ENCODE measurements at regions of chr12 and their contacts with region 1.

Region 1: DNA sequence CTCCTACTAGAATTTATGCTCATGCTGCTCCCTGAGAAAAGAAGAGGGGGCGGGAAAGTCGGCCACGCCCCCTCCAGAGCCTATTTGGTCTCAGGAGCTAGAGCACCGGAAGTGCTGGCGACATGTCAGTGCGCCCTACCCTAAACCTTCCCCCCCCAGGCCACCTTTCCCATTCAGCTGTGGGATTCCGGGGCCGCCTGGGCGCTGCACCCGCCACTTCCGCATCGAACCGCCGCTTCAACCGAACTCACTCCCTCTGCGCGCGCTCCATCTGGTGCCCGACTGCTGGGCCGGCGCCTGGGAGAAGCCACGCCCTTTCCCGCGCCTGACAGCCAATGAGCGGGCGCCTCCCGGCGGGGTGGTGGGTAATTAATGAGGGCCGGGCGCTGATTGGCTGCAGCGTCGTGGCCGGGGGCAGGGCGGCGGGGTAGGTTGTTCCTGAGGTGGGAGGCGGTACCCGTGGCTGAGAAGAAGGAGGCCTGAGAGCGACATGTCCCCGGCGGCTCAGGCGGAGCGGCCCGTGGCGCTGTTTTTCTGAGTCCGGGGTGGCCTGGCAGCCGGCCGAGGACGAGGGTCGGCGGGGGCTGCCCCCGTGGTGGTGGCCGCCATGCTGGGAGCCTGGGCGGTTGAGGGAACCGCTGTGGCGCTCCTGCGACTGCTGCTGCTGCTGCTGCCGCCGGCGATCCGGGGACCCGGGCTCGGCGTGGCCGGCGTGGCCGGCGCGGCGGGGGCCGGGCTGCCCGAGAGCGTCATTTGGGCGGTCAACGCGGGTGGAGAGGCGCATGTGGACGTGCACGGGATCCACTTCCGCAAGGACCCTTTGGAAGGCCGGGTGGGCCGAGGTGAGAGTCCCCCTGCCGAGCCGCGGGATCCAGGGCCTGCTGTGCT is at the start of gene MLEC:
- DNase-seq: peak; percentile 91
- ATAC-seq: peak; percentile 78
- H3K4me3 ChIP-seq: peak within 1 kb of the TSS; percentile 97
- H3K27ac ChIP-seq: peak within 1 kb of the TSS; percentile 96
- H3K4me1 ChIP-seq: peaks cover 15% of the 10 kb centered on the region
- H3K27me3 ChIP-seq: no peaks in the 10 kb centered on the region
- CTCF ChIP-seq: peak; percentile 26 to 79 (median 41); a peak in 5 of 6 replicates
- EP300 ChIP-seq: peak in 1 of 2 experiments; percentile 21; a peak in 1 of 4 replicates
- POLR2A ChIP-seq: peak; percentile 91
- RAD21 ChIP-seq: peak; percentile 68
- polyA plus RNA-seq, gene MLEC: 26.7 to 28.2 TPM

Region 2: GRCh38 chr12:120469450-120470149 is 217.3 kb before region 1 on chr12 and contains the start of gene SRSF9:
- CTCF ChIA-PET with region 1: no interaction called
- POLR2A ChIA-PET with region 1: no interaction called
- RAD21 ChIA-PET with region 1: no interaction called
- SMC1A ChIA-PET with region 1: no interaction called
- in situ Hi-C with region 1: no loop called
- intact Hi-C with region 1: no loop called
- DNase-seq: peak; percentile 80
- ATAC-seq: peak; percentile 89
- H3K4me3 ChIP-seq: peak within 1 kb of the TSS; percentile 87
- H3K27ac ChIP-seq: peak within 1 kb of the TSS; percentile 80
- H3K4me1 ChIP-seq: peaks cover 16% of the 10 kb centered on the region
- H3K27me3 ChIP-seq: no peaks in the 10 kb centered on the region
- CTCF ChIP-seq: peak; percentile 92 to 99 (median 96)
- EP300 ChIP-seq: no peak
- POLR2A ChIP-seq: peak; percentile 91
- RAD21 ChIP-seq: no peak
- polyA plus RNA-seq, gene SRSF9: 56.2 to 96.4 TPM

Region 3: GRCh38 chr12:120640840-120641833 is 45.8 kb before region 1 on chr12:
- CTCF ChIA-PET with region 1: interaction called, 454 read pairs
- POLR2A ChIA-PET with region 1: interaction called, 7 read pairs
- RAD21 ChIA-PET with region 1: interaction called, 144 read pairs
- SMC1A ChIA-PET with region 1: interaction called, 167 read pairs
- in situ Hi-C with region 1: no loop called
- intact Hi-C with region 1: no loop called
- DNase-seq: no peak
- ATAC-seq: peak; percentile 88
- H3K4me3 ChIP-seq: peak overlapping the region; percentile 32; the same call in 1 of the 2 replicates
- H3K27ac ChIP-seq: no peak overlapping the region
- H3K4me1 ChIP-seq: no peaks in the 10 kb centered on the region
- H3K27me3 ChIP-seq: peaks cover 6 to 8% of the 10 kb centered on the region in 2 experiments
- CTCF ChIP-seq: no peak
- EP300 ChIP-seq: no peak
- POLR2A ChIP-seq: no peak
- RAD21 ChIP-seq: no peak

Region 4: GRCh38 chr12:120662879-120663278 is 24.1 kb before region 1 on chr12:
- CTCF ChIA-PET with region 1: interaction called, 5 read pairs
- POLR2A ChIA-PET with region 1: interaction called, 57 read pairs
- RAD21 ChIA-PET with region 1: interaction called, 54 read pairs
- SMC1A ChIA-PET with region 1: interaction called, 149 read pairs
- in situ Hi-C with region 1: no loop called
- intact Hi-C with region 1: no loop called
- DNase-seq: peak; percentile 67
- ATAC-seq: peak; percentile 95
- H3K4me3 ChIP-seq: no peak overlapping the region
- H3K27ac ChIP-seq: no peak overlapping the region
- H3K4me1 ChIP-seq: peaks cover 9% of the 10 kb centered on the region
- H3K27me3 ChIP-seq: no peaks in the 10 kb centered on the region
- CTCF ChIP-seq: no peak
- EP300 ChIP-seq: 0 out of 4 replicates have a peak, but pooled peaks of 1 of the 2 experiments have one; percentile 59
- POLR2A ChIP-seq: no peak
- RAD21 ChIP-seq: 0 out of 2 replicates have a peak, but pooled peaks have one; percentile 4

Region 5: GRCh38 chr12:120669055-120669840 is 17.7 kb before region 1 on chr12:
- CTCF ChIA-PET with region 1: interaction called, 15 read pairs
- POLR2A ChIA-PET with region 1: interaction called, 57 read pairs
- RAD21 ChIA-PET with region 1: interaction called, 54 read pairs
- SMC1A ChIA-PET with region 1: interaction called, 149 read pairs
- in situ Hi-C with region 1: no loop called
- intact Hi-C with region 1: loop called (anchors 2 kb)
- DNase-seq: peak; percentile 79
- ATAC-seq: peak; percentile 84
- H3K4me3 ChIP-seq: peak overlapping the region; percentile 39
- H3K27ac ChIP-seq: peak overlapping the region; percentile 46
- H3K4me1 ChIP-seq: peaks cover 38% of the 10 kb centered on the region
- H3K27me3 ChIP-seq: no peaks in the 10 kb centered on the region
- CTCF ChIP-seq: no peak
- EP300 ChIP-seq: no peak; a peak in 1 of 4 replicates
- POLR2A ChIP-seq: no peak
- RAD21 ChIP-seq: no peak

Region 6: GRCh38 chr12:120698665-120699064 is 11.7 kb after region 1 on chr12:
- CTCF ChIA-PET with region 1: interaction called, 18 read pairs
- POLR2A ChIA-PET with region 1: interaction called, 7 read pairs
- RAD21 ChIA-PET with region 1: interaction called, 5 read pairs
- SMC1A ChIA-PET with region 1: interaction called, 14 read pairs
- in situ Hi-C with region 1: no loop called
- intact Hi-C with region 1: no loop called
- DNase-seq: no peak
- ATAC-seq: no peak
- H3K4me3 ChIP-seq: no peak overlapping the region
- H3K27ac ChIP-seq: no peak overlapping the region
- H3K4me1 ChIP-seq: no peaks in the 10 kb centered on the region
- H3K27me3 ChIP-seq: no peaks in the 10 kb centered on the region
- CTCF ChIP-seq: no peak
- EP300 ChIP-seq: no peak
- POLR2A ChIP-seq: no peak
- RAD21 ChIP-seq: no peak

Region 7: GRCh38 chr12:120710031-120710804 is 23.3 kb after region 1 on chr12 and contains the start of gene UNC119B:
- CTCF ChIA-PET with region 1: interaction called, 25 read pairs
- POLR2A ChIA-PET with region 1: interaction called, 7 read pairs
- RAD21 ChIA-PET with region 1: interaction called, 24 read pairs
- SMC1A ChIA-PET with region 1: interaction called, 11 read pairs
- in situ Hi-C with region 1: no loop called
- intact Hi-C with region 1: loop called (anchors 2 kb)
- DNase-seq: no peak
- ATAC-seq: peak; percentile 88
- H3K4me3 ChIP-seq: peak within 1 kb of the TSS; percentile 68
- H3K27ac ChIP-seq: peak within 1 kb of the TSS; percentile 62
- H3K4me1 ChIP-seq: peaks cover 15% of the 10 kb centered on the region
- H3K27me3 ChIP-seq: no peaks in the 10 kb centered on the region
- CTCF ChIP-seq: no peak
- EP300 ChIP-seq: no peak
- POLR2A ChIP-seq: peak; percentile 79
- RAD21 ChIP-seq: no peak
- polyA plus RNA-seq, gene UNC119B: 4.3 to 8.5 TPM

Region 8: DNA sequence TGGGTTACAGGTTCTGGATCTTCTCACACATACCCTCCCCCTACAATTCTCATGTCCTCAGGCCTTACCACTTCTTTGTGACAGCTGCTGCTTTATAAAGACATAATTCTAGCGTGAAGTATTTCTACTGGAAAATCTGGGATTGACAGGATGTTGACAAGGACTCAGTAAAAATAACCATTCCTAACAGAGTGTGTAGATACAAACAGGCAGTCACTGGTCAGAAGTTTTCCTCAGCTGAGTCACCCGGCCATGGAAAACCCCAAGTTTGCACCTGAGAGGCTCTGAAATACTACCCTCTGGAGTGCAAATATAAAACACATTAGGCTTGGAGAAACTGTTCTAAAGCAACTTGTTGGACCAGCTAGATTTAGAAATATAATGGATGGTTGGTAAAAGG is 162.8 kb after region 1 on chr12:
- CTCF ChIA-PET with region 1: no interaction called
- POLR2A ChIA-PET with region 1: no interaction called
- RAD21 ChIA-PET with region 1: interaction called, 3 read pairs
- SMC1A ChIA-PET with region 1: interaction called, 3 read pairs
- in situ Hi-C with region 1: no loop called
- intact Hi-C with region 1: loop called (anchors 5 kb)
- DNase-seq: no peak
- ATAC-seq: no peak
- H3K4me3 ChIP-seq: no peak overlapping the region
- H3K27ac ChIP-seq: peak overlapping the region; percentile 54
- H3K4me1 ChIP-seq: peaks cover 68% of the 10 kb centered on the region
- H3K27me3 ChIP-seq: no peaks in the 10 kb centered on the region
- CTCF ChIP-seq: no peak
- EP300 ChIP-seq: no peak
- POLR2A ChIP-seq: no peak
- RAD21 ChIP-seq: no peak

Region 9: GRCh38 chr12:120866108-120866507 is 179.2 kb after region 1 on chr12:
- CTCF ChIA-PET with region 1: no interaction called
- POLR2A ChIA-PET with region 1: no interaction called
- RAD21 ChIA-PET with region 1: no interaction called
- SMC1A ChIA-PET with region 1: no interaction called
- in situ Hi-C with region 1: no loop called
- intact Hi-C with region 1: no loop called
- DNase-seq: no peak
- ATAC-seq: no peak
- H3K4me3 ChIP-seq: no peak overlapping the region
- H3K27ac ChIP-seq: no peak overlapping the region
- H3K4me1 ChIP-seq: peaks cover 5% of the 10 kb centered on the region; the same call in 1 of the 2 replicates
- H3K27me3 ChIP-seq: no peaks in the 10 kb centered on the region
- CTCF ChIP-seq: no peak
- EP300 ChIP-seq: no peak
- POLR2A ChIP-seq: no peak
- RAD21 ChIP-seq: no peak